ENCODE measurements at regions of chr10 and their contacts with region 1.

Region 1: DNA sequence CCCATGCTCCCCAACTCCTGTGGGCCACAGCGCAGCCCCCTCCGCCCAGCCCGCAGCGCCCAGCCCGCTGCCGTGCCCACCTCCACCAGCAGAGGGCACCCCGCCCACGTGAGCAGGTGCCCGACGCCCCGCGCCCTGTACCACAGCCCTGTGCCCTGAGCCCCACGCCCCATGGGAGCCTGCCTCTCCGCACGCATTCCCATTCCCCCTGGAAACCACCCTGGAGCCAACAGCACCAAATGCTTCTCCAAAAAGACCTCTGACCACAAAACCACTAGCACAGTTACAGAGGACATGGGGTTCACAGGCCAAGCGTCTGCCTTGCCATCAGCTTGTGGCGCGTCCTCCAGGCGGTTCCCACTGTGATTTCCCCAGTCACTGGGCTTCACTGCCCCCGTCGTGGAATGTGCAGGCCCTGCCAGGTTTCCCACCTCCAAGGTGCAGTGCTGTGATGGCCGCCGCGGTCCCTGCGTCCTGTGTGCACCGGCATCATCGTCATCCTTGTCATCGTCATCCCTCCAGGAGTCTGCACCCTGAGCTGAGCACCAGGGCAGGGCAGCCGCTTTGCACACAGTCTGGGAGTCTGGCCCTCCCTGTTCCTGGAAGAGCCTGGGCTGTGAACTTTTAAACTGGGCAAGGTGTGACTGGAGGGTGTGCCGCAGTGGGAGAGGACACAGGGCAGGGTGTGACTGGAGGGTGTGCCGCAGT is 61.7 kb downstream of the PWWP2B start:
- DNase-seq: no peak
- H3K4me3 ChIP-seq: no peak overlapping the region
- H3K27ac ChIP-seq: peak overlapping the region; percentile 2
- H3K4me1 ChIP-seq: peaks cover 26% of the 10 kb centered on the region
- H3K27me3 ChIP-seq: no peaks in the 10 kb centered on the region
- CTCF ChIP-seq: peak; percentile 89 to 98 (median 95)
- POLR2A ChIP-seq: no peak

Region 2: GRCh38 chr10:131663351-131663750 is 795.4 kb before region 1 on chr10:
- intact Hi-C with region 1: no loop called
- DNase-seq: no peak
- H3K4me3 ChIP-seq: no peak overlapping the region
- H3K27ac ChIP-seq: no peak overlapping the region
- H3K4me1 ChIP-seq: no peaks in the 10 kb centered on the region
- H3K27me3 ChIP-seq: no peaks in the 10 kb centered on the region
- CTCF ChIP-seq: no peak
- POLR2A ChIP-seq: no peak

Region 3: DNA sequence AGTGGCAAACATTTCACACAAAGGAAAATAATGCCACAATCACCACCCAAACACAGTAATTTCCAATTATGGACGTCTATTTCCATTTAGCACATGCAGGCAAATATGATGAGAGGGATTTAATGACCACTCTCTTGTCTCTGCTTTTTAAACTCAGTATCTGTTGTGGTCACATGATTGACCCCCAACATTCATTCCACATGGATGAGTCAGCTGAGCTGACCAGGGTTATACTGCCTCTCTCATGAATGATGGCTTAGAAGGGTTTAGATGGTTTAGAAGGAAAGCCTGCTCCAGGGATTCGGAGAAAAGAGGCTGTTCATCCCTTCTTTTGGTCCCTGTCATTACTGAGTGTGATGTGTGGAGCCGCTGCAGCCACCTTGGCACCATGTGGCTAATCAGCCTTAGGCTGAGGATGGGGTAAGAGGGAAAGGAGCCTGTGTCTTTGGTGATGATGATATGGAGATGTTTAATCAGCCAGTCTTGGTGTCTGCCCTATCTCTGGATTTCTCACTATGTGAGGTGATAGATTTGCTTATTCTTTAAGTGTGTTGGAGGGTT is 431.2 kb before region 1 on chr10:
- intact Hi-C with region 1: no loop called
- DNase-seq: no peak
- H3K4me3 ChIP-seq: no peak overlapping the region
- H3K27ac ChIP-seq: no peak overlapping the region
- H3K4me1 ChIP-seq: peaks cover 6% of the 10 kb centered on the region
- H3K27me3 ChIP-seq: no peaks in the 10 kb centered on the region
- CTCF ChIP-seq: no peak
- POLR2A ChIP-seq: no peak

Region 4: GRCh38 chr10:132223156-132223590 is 235.6 kb before region 1 on chr10:
- intact Hi-C with region 1: loop called (anchors 5 kb)
- DNase-seq: no peak
- H3K4me3 ChIP-seq: no peak overlapping the region
- H3K27ac ChIP-seq: no peak overlapping the region
- H3K4me1 ChIP-seq: peaks cover 5% of the 10 kb centered on the region
- H3K27me3 ChIP-seq: no peaks in the 10 kb centered on the region
- CTCF ChIP-seq: peak; percentile 64 to 80 (median 70)
- POLR2A ChIP-seq: no peak

Region 5: DNA sequence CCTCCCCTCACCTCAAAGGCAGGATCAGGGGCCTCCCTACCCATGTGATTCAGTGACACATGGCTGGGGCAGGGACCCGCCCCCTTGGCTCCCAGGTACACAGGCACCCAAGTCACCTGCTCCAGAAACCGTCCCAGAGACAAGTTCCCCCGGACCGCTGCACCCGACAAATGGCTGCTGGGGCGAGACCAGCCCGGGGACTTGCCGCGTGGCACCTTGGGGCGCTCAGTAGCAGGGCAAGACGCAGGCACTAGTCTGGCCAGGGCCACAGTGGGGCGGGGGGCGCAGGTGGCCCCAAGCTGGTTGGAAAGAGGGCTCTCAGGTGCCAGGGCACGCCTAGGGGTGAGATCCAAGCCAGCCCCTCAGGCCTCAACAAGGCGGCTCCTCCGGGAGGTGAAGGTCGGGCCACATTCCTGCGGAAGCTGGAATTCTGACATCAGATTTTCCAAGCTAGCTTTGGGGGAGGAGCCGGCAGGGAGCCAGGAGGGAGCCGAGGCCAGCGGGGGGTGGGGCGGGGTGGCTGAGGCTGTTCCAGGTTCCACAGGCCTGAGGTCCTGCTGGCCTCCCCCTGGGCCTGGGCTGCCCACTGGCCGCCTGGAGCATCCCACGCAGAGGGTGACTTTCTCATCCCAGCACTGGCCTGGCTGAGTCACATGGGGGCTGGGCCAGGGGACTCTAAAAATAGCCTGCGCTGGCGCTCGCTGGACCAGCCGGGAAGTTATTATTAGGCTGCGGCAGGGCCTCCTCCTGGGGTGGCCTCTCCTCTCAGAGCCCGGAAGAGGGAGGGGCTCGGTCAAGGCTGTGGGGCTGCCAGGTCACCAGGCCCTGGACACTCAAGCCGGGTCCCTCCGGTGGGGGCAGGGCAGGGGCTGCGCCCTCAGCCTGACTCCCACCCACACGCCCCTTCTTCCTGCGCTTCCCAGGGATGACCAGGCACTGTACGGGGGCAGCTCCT is 58.3 kb after region 1 on chr10:
- intact Hi-C with region 1: loop called (anchors 10 kb)
- DNase-seq: peak in 1 of 2 donors; percentile 96
- H3K4me3 ChIP-seq: peak overlapping the region in 1 of 2 donors; percentile 21
- H3K27ac ChIP-seq: peak overlapping the region; percentile 93
- H3K4me1 ChIP-seq: peaks cover 64% of the 10 kb centered on the region
- H3K27me3 ChIP-seq: no peaks in the 10 kb centered on the region
- CTCF ChIP-seq: no peak
- POLR2A ChIP-seq: no peak

Measured in vagina (tissue), 2 donors.